ENCODE measurements at regions of chr4 and their contacts with region 1.

Region 1: DNA sequence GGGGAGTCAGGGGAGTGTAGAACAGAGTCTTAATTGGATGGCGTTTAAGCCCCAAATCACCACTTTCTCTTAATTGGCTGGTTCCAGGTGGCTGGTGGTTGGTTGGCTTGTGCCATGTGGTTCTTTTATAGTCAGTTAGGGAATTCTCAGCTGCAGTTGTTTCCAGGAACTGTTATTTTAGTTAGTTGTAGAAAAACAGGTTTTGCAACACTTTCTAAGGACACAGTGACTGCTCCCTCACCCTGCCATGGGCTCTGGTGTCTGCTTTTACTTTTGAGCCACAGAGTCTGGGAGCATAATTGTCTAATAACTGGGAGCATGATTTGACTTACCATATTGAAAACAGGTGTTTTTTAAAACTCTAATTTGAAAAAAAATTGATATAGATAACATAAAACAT is 75.8 kb upstream of the PCDH18 start:
- DNase-seq: peak in 1 of 2 experiments; percentile 9
- H3K4me3 ChIP-seq: no peak overlapping the region
- H3K27ac ChIP-seq: no peak overlapping the region
- H3K4me1 ChIP-seq: no peaks in the 10 kb centered on the region
- H3K27me3 ChIP-seq: no peaks in the 10 kb centered on the region
- CTCF ChIP-seq: no peak

Region 2: GRCh38 chr4:137576446-137576845 is 31.6 kb before region 1 on chr4:
- CTCF ChIA-PET with region 1: no interaction called
- POLR2A ChIA-PET with region 1: no interaction called
- intact Hi-C with region 1: loop called (anchors 1 kb)
- DNase-seq: no peak
- H3K4me3 ChIP-seq: no peak overlapping the region
- H3K27ac ChIP-seq: no peak overlapping the region
- H3K4me1 ChIP-seq: no peaks in the 10 kb centered on the region
- H3K27me3 ChIP-seq: no peaks in the 10 kb centered on the region
- CTCF ChIP-seq: no peak

Region 3: GRCh38 chr4:137664046-137664387 is 55.9 kb after region 1 on chr4:
- CTCF ChIA-PET with region 1: no interaction called
- POLR2A ChIA-PET with region 1: no interaction called
- intact Hi-C with region 1: no loop called
- DNase-seq: no peak
- H3K4me3 ChIP-seq: no peak overlapping the region
- H3K27ac ChIP-seq: no peak overlapping the region
- H3K4me1 ChIP-seq: no peaks in the 10 kb centered on the region
- H3K27me3 ChIP-seq: no peaks in the 10 kb centered on the region
- CTCF ChIP-seq: no peak